AG04449 (cell line): ENCODE measurements at regions of chr6 and their contacts with region 1.

Region 1: DNA sequence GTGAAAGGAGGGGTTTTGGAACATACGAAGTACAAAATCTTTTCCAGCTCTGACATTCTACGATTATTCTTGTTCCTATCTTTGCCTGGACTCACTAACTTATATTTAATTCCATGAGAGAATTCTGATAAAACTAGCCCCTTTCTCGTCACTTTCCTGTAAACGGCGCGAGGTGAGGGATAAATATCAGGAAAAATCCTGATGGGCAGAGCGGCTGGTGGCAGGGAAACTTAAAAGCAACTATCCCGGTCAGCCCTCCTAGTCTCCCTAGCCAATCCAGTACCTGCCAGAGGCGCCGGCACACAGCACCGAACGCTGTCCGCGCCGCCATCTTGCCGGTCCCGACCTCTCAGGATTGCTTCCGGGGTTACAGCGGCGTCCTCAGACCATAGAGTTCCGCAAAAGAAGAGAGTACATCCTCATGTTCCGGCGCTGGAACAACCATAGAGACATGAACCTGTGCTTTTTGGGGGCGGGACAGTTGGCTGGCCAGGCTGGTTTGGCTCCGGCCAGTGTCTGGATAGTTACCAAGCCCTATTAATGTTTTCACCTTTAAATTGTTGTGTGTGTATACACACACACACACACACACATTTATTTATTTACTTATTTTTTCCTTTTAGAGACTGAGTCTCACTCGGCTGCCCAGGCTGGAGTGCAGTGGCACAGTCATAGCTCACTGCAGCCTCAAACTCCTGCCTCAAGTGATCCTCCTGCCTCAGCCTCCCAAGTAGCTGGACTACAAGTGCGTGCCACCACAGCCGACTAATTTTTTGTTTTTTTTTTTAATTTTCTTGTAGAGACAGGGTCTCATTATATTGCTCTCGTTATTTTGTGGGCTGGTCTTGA is at the start of gene MRPS10:
- DNase-seq: peak; percentile 70
- H3K4me3 ChIP-seq: peak within 1 kb of the TSS; percentile 83
- CTCF ChIP-seq: no peak

Region 2: DNA sequence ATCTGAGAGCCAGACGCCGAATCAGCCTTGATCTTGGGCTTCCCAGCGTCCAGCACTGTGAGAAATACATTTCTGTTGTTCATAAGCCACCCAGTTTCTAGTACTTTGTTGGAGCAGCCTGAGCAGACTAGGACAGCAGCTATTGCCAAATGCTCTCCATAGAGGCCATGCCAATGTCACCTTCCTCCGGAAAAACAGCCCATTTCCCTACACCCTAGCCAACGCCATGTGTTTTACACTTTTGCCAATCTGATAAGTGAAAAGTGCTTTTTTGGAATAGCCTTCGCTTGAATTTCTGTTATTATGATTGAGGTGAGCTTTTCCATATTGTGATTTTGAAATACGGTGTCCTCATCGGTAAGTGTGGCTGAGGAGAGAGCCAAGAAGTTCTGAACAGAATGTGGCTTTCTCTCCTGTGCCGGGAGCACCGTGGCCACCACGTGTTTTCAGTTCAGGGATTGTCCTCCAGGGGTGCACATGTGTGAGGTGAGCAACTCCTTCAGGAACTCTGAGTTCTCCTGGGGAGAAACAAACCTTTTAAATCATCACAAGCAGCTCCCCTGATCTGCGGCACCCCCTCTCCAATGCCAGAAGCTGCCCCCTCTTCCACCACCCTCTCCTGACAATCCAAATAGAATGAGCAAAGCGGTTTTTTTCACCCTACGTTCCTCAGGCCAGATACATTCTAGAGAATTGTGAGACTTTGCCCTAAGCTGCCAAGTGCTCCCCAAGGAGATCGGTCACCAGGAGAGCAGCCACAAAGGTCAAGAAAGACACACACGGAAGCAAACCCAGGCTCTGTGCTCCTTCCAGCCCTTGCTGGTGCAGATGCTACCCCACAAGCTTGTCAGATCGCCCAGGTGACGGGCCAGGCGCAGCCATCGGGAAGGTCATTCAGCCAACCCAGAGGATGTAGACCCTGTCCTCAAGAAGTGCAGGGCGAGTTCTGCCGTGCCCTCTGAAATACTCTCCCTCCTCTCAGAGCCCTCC is 131.4 kb before region 1 on chr6:
- CTCF ChIA-PET with region 1: interaction called, 38 read pairs
- POLR2A ChIA-PET with region 1: no interaction called
- DNase-seq: no peak
- H3K4me3 ChIP-seq: no peak overlapping the region
- CTCF ChIP-seq: peak; percentile 2

Region 3: GRCh38 chr6:42175860-42176259 is 41.9 kb before region 1 on chr6:
- CTCF ChIA-PET with region 1: interaction called, 71 read pairs
- POLR2A ChIA-PET with region 1: no interaction called
- DNase-seq: no peak
- H3K4me3 ChIP-seq: no peak overlapping the region
- CTCF ChIP-seq: no peak

Region 4: GRCh38 chr6:42200035-42200434 is 17.7 kb before region 1 on chr6:
- CTCF ChIA-PET with region 1: interaction called, 83 read pairs
- POLR2A ChIA-PET with region 1: interaction called, 4 read pairs
- DNase-seq: peak; percentile 87
- H3K4me3 ChIP-seq: no peak overlapping the region
- CTCF ChIP-seq: no peak